ENCODE measurements at regions of chr10 and their contacts with region 1.

Region 1: GRCh38 chr10:101067356-101068083 is 5.7 kb downstream of the KAZALD1 start:
- DNase-seq: peak; percentile 62 to 80 (median 75)
- H3K4me3 ChIP-seq: peak overlapping the region; percentile 41
- H3K27ac ChIP-seq: no peak overlapping the region
- H3K4me1 ChIP-seq: peaks cover 8% of the 10 kb centered on the region
- H3K27me3 ChIP-seq: peaks cover 3% of the 10 kb centered on the region
- CTCF ChIP-seq: peak; percentile 66 to 84 (median 79)
- EP300 ChIP-seq: no peak
- POLR2A ChIP-seq: no peak

Region 2: DNA sequence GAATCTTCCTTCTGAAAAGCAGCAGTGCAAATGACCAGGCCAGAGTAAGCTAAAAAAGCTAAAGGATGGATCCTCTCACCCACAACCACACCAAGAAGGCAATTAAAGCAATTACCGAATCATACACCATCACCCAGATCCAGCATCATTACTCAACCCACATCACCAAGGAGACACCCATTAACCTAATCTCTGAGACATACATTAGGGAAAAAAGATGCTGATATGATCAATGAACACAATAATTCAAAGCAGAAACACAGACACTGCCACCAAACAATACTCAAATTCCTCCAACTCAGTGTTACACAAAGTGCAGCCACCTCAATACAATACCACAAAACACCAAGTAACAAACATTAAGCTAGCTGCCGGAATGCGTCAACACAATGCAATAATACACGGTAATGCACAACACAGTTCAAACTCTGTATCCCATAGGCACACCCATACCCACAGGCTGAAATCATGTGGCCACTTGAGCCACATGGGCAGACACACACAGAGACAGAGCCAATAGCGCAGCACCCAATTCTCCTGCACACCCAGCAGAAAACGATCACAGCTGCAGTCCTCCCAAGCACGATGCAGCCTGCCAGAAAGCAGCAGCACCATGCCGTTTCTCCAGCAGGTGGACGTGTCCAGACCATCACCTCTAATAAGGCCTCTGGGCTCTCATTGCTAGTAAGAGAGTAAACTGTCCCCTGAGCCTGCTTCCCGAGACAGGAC is 300.7 kb before region 1 on chr10:
- intact Hi-C with region 1: no loop called
- DNase-seq: no peak
- H3K4me3 ChIP-seq: no peak overlapping the region
- H3K27ac ChIP-seq: no peak overlapping the region
- H3K4me1 ChIP-seq: no peaks in the 10 kb centered on the region
- H3K27me3 ChIP-seq: no peaks in the 10 kb centered on the region
- CTCF ChIP-seq: no peak
- EP300 ChIP-seq: no peak
- POLR2A ChIP-seq: no peak

Region 3: GRCh38 chr10:100986952-100987750 is 80.4 kb before region 1 on chr10 and contains the starts of genes MRPL43 and TWNK:
- intact Hi-C with region 1: no loop called
- DNase-seq: peak; percentile 81 to 90 (median 84)
- H3K4me3 ChIP-seq: peak within 1 kb of the TSS; percentile 94
- H3K27ac ChIP-seq: peak within 1 kb of the TSS in 1 of 2 donors; percentile 58
- H3K4me1 ChIP-seq: peaks cover 19% of the 10 kb centered on the region
- H3K27me3 ChIP-seq: no peaks in the 10 kb centered on the region
- CTCF ChIP-seq: no peak
- EP300 ChIP-seq: no peak
- POLR2A ChIP-seq: peak; percentile 56
- total RNA-seq, gene MRPL43: 68.2 to 113 (median 83.3) TPM
- total RNA-seq, gene TWNK: 2.4 to 13.9 (median 10.7) TPM

Region 4: GRCh38 chr10:101031128-101031795 is 36.3 kb before region 1 on chr10 and contains the starts of genes PDZD7 and SFXN3:
- intact Hi-C with region 1: loop called in 1 of 4 experiments (anchors 5 kb)
- DNase-seq: peak; percentile 96 to 99 (median 98)
- H3K4me3 ChIP-seq: peak within 1 kb of the TSS; percentile 62
- H3K27ac ChIP-seq: peak within 1 kb of the TSS; percentile 91 to 95
- H3K4me1 ChIP-seq: no peaks in the 10 kb centered on the region
- H3K27me3 ChIP-seq: no peaks in the 10 kb centered on the region
- CTCF ChIP-seq: no peak
- EP300 ChIP-seq: no peak
- POLR2A ChIP-seq: peak; percentile 68
- total RNA-seq, gene PDZD7: 0.56 to 1.2 (median 0.74) TPM
- total RNA-seq, gene SFXN3: 20.2 to 47.0 (median 28.6) TPM

Region 5: DNA sequence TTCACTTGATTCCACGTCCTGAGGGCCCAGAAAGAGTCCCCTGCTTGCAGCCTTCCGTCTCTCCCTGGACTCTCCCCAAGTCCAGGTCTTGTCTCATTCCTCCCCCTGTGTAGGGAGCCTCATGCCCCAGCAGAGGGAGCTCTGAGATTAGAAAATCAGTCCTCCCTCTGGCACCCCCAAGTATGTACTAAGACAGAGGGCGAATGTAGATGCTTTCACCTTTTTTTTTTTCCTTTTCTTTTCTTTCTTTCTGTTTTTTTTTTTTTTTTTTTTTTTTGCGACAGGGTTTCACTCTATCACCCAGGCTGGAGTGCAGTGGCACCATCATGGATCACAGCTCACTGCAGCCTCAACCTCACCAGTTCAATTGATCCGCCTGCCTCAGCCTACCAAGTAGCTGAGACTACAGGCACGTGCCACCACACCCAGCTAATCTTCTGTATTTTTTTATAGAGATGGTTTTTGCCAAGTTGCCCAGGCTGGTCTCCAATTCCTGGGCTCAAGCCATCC is 26.2 kb before region 1 on chr10:
- intact Hi-C with region 1: loop called in 1 of 4 experiments (anchors 1 kb)
- DNase-seq: peak; percentile 74 to 89 (median 83)
- H3K4me3 ChIP-seq: no peak overlapping the region
- H3K27ac ChIP-seq: no peak overlapping the region
- H3K4me1 ChIP-seq: peaks cover 3% of the 10 kb centered on the region
- H3K27me3 ChIP-seq: no peaks in the 10 kb centered on the region
- CTCF ChIP-seq: peak; percentile 32 to 69 (median 49)
- EP300 ChIP-seq: no peak
- POLR2A ChIP-seq: no peak

Region 6: DNA sequence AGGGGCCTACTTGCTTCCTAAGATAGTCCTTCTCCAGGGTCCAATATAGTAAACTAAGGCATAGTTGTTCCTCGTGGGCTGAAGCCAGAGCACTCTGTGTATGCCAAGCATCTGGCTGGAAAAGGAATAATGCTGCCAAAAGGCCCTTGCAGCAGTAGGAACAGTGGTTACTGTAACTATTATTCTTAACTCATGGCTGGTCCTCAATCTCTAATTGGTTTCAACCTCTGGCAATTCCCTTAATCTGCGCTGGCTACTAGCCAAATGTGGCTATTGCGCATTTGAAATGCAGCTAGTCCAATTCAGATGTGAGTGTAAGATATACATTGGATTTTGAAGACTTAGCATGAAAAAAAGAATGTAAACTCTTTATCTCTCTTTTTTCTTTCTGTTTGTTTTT is 189.6 kb after region 1 on chr10:
- intact Hi-C with region 1: no loop called
- DNase-seq: no peak
- H3K4me3 ChIP-seq: no peak overlapping the region
- H3K27ac ChIP-seq: no peak overlapping the region
- H3K4me1 ChIP-seq: no peaks in the 10 kb centered on the region
- H3K27me3 ChIP-seq: no peaks in the 10 kb centered on the region
- CTCF ChIP-seq: no peak
- EP300 ChIP-seq: no peak
- POLR2A ChIP-seq: no peak

Measured in ovary (tissue), 10 donors.